Heart right ventricle (tissue), 16 donors: ENCODE measurements at regions of chr9 and their contacts with region 1.

Region 1: DNA sequence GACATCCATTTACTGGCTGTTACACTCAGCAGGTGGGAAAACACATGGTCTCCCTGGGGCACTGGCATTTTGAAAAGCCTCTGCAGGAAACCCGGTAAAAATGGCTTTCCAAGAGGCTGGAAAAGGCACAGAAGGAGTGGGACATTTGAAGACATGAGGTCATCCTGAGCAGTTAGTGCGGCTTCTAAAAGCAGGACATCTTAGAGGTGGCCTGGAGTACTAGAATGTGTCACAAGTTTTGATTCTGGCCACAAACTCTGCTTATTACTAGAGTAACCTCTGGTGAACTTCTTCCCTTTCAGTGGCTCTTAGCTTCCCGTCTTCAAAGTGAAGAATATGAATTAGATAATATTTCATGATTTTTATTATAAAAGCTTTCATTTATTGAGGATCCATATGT is 423.0 kb upstream of the BRINP1 start:
- DNase-seq: no peak
- ATAC-seq: peak in 1 of 8 donors; percentile 54
- H3K4me3 ChIP-seq: no peak overlapping the region
- H3K27ac ChIP-seq: no peak overlapping the region
- H3K4me1 ChIP-seq: peaks cover 0 to 7% (median 0%) of the 10 kb centered on the region in 9 donors
- H3K27me3 ChIP-seq: no peaks in the 10 kb centered on the region
- CTCF ChIP-seq: no peak

Region 2: DNA sequence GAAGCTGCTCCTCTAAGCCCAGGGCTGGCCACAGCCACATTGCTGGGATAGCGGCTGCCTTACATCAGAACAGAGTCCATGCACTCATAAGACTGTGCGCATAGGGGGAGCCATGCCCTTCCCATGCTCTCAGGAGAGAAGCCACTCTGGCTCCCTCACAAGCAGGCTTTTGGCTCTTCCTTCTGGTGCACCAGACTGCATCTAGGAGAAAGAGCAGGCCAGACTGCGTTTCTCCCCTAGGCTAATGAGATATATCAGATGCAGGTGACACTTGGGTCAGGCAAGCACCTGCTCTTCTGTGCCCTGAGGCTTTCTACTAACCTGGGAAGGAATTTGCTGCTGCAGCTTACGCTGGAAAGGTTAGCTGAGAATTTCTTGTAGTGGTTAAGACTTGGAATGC is 379.8 kb before region 1 on chr9:
- intact Hi-C with region 1: no loop called
- DNase-seq: no peak
- ATAC-seq: no peak
- H3K4me3 ChIP-seq: no peak overlapping the region
- H3K27ac ChIP-seq: no peak overlapping the region
- H3K4me1 ChIP-seq: no peaks in the 10 kb centered on the region
- H3K27me3 ChIP-seq: no peaks in the 10 kb centered on the region
- CTCF ChIP-seq: no peak

Region 3: DNA sequence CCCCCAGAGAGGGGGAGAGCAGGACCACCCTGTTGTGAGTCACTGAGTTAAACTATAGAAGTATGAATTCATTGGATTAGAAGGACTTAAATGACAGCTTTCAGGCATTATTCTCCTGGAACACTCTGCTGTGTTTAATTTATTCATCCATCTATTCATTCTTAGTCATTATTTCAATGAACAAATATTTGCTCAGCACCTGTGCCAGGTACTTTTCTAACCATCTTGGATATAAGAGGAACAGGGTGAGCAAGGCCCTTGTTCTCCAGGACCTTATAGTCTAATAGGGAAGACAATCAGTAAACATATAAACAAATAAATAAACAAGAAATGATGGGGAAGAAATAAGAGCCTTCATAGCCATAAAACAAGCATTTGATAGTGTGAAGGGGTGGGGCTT is 60.9 kb after region 1 on chr9:
- intact Hi-C with region 1: loop called in 1 of 10 experiments (anchors 10 kb)
- DNase-seq: no peak
- ATAC-seq: no peak
- H3K4me3 ChIP-seq: no peak overlapping the region
- H3K27ac ChIP-seq: no peak overlapping the region
- H3K4me1 ChIP-seq: no peaks in the 10 kb centered on the region
- H3K27me3 ChIP-seq: no peaks in the 10 kb centered on the region
- CTCF ChIP-seq: no peak